ENCODE measurements at regions of chr14 and their contacts with region 1.

Region 1: GRCh38 chr14:30375296-30375892 is 183.6 kb upstream of the G2E3 start:
- DNase-seq: peak; percentile 43 to 80 (median 58)
- ATAC-seq: peak; percentile 63 to 71
- H3K4me3 ChIP-seq: no peak overlapping the region
- H3K27ac ChIP-seq: no peak overlapping the region
- H3K4me1 ChIP-seq: no peaks in the 10 kb centered on the region
- H3K27me3 ChIP-seq: no peaks in the 10 kb centered on the region

Region 2: DNA sequence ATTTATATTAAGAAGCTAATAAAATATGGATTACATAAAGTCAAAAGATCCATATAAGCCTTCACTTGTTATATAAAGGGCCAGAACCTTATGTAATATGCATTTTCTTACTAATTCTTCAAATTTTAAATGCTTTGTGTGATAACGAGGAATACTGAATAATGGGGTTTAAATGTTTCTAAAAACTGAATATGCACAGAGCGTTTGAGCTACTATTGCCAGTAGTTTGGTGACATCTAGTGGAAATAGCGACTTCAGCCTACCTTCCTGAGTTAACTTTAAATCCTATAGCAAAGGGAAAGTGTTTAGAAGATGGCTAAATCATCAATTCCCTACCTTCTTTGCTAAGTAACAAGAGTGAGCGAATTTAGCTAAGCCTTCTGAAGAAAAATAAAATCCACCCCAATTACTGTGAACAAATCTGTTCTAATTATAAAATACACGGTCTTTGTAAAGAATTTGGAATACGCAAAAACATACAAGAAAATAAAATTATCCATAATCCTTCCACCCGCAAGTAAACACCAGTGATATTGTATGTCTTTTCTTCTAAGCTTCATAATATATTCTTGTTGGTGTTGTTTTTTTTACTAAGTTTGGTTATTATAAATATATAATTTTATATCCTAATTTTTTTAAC is 68.1 kb after region 1 on chr14:
- intact Hi-C with region 1: loop called in 1 of 4 experiments (anchors 5 kb)
- DNase-seq: no peak
- ATAC-seq: no peak
- H3K4me3 ChIP-seq: no peak overlapping the region
- H3K27ac ChIP-seq: no peak overlapping the region
- H3K4me1 ChIP-seq: no peaks in the 10 kb centered on the region
- H3K27me3 ChIP-seq: no peaks in the 10 kb centered on the region

Region 3: GRCh38 chr14:30521899-30522736 is 146.7 kb after region 1 on chr14:
- intact Hi-C with region 1: loop called in 1 of 4 experiments (anchors 10 kb)
- DNase-seq: no peak
- ATAC-seq: no peak
- H3K4me3 ChIP-seq: no peak overlapping the region
- H3K27ac ChIP-seq: no peak overlapping the region
- H3K4me1 ChIP-seq: no peaks in the 10 kb centered on the region
- H3K27me3 ChIP-seq: no peaks in the 10 kb centered on the region